Mammary epithelial cell (primary cell): ENCODE measurements at regions of chr3 and their contacts with region 1.

Region 1: DNA sequence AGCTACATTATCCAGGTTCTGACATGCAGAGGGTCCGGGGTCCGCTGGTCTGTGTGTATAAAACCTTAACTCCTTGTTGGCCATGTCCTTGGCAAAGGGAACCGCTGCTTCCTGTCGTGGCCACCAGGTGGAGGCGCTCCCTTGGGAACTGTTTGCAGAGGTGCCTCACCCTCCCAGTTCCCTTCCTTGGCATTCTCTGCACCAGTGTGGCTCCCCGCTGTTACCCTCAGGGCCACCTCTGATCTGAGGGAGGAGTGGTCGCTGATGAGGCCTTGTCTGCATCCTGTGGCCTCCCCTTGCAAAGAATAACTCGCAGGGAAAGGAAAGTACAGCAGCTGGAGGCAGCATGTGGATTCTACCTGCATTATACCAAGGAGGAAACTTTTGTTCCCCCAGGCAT is 89.6 kb downstream of the CHRD start:
- DNase-seq: peak; percentile 35
- H3K4me3 ChIP-seq: no peak overlapping the region
- H3K27ac ChIP-seq: no peak overlapping the region
- H3K4me1 ChIP-seq: peaks cover 10% of the 10 kb centered on the region
- H3K27me3 ChIP-seq: no peaks in the 10 kb centered on the region
- CTCF ChIP-seq: peak; percentile 84 to 97

Region 2: GRCh38 chr3:183895296-183895695 is 574.1 kb before region 1 on chr3:
- CTCF ChIA-PET with region 1: no interaction called
- dilution Hi-C with region 1: no loop called
- in situ Hi-C with region 1: no loop called
- intact Hi-C with region 1: loop called (anchors 5 kb)
- DNase-seq: peak; percentile 32
- H3K4me3 ChIP-seq: no peak overlapping the region
- H3K27ac ChIP-seq: no peak overlapping the region
- H3K4me1 ChIP-seq: no peaks in the 10 kb centered on the region
- H3K27me3 ChIP-seq: no peaks in the 10 kb centered on the region
- CTCF ChIP-seq: peak; percentile 83 to 92

Region 3: GRCh38 chr3:184380191-184380626 is 89.2 kb before region 1 on chr3:
- CTCF ChIA-PET with region 1: no interaction called
- dilution Hi-C with region 1: loop called (anchors 5 kb)
- in situ Hi-C with region 1: no loop called
- intact Hi-C with region 1: no loop called
- DNase-seq: no peak
- H3K4me3 ChIP-seq: peak overlapping the region in 2 of 3 experiments; percentile 15 to 43
- H3K27ac ChIP-seq: no peak overlapping the region
- H3K4me1 ChIP-seq: peaks cover 3% of the 10 kb centered on the region
- H3K27me3 ChIP-seq: peaks cover 18% of the 10 kb centered on the region
- CTCF ChIP-seq: no peak

Region 4: GRCh38 chr3:184423561-184423960 is 45.9 kb before region 1 on chr3:
- CTCF ChIA-PET with region 1: interaction called, 16 read pairs
- dilution Hi-C with region 1: loop called (anchors 5 kb)
- in situ Hi-C with region 1: loop called (anchors 5 kb)
- intact Hi-C with region 1: loop called (anchors 1 kb)
- DNase-seq: peak; percentile 15
- H3K4me3 ChIP-seq: no peak overlapping the region
- H3K27ac ChIP-seq: no peak overlapping the region
- H3K4me1 ChIP-seq: peaks cover 5% of the 10 kb centered on the region
- H3K27me3 ChIP-seq: peaks cover 3% of the 10 kb centered on the region
- CTCF ChIP-seq: no peak

Region 5: DNA sequence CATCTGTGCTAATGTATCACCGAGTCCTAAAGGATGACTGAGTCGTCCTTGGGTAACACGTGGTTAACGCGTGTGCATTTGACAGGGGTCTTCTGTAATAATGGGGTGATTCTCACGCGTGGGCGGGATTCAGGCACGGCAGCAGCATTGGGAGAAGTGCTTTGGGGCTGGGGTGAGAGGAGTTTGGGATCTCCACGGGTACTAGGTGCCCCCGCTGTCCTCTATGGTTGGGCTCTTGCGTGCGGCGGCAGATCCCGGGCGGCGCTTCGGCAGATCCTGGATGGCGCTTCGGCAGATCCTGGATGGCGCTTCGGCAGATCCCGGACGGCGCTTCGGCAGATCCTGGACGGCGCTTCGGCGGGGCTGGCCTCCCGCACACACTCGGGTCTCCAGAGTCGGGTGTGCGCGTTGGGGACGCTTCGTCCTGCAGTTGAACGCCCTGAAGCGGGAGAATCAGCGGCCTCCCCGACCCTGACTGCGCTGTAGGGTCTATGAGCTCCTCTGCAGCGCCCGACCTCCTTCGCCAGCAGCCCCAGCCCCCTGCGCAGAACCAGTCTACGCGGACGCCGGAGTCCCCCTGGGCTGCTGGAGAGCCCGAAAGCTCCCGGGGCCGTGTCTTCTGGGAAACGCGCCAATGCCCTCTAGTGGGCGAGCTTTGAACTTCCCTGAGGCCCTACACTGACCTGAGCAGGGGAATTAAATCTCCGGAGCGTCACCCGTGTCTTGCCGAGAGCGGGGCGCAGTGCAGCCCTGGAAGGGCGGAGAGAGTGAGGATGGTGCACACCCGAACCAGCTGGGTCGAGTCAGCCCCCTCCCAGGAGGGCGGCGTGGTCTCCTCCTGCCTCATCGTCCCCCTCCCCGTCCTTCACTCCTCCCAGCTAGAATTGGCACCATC is 44.1 kb after region 1 on chr3:
- CTCF ChIA-PET with region 1: interaction called, 3 read pairs
- dilution Hi-C with region 1: no loop called
- in situ Hi-C with region 1: no loop called
- intact Hi-C with region 1: loop called (anchors 1 kb)
- DNase-seq: peak; percentile 63
- H3K4me3 ChIP-seq: peak overlapping the region; percentile 41 to 62 (median 54)
- H3K27ac ChIP-seq: no peak overlapping the region
- H3K4me1 ChIP-seq: peaks cover 6% of the 10 kb centered on the region
- H3K27me3 ChIP-seq: peaks cover 3% of the 10 kb centered on the region
- CTCF ChIP-seq: peak; percentile 63 to 85

Region 6: DNA sequence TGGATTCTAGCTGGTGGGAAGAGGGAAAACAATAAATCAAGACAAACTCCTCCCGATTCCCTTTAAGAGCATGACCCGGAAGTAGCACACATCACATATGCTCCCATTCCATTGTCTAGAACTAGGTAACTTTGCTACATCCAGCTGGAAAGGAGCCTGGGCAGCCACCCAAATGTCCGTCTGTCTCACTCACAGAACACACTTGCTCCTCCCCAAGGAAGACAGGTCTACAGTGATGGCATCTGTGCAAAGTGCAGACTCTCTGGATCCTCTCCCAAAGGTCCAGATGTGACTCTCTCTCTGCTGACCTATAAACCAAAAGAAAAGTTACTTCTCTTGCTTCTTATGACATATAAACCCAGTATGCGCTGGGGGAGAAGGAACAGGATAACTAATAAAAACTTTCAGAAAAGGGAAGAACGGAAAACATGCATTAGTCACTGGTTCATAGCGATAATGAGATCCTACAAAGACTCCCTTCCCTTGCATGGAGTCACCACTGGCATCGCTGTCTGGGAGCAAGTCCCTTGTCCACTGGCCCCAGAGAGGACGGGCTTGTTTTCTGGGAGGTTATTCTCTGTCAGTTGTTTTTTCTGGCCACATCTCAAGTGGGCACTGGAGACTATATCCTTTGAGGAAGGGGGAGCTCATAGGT is 62.3 kb after region 1 on chr3:
- CTCF ChIA-PET with region 1: no interaction called
- dilution Hi-C with region 1: no loop called
- in situ Hi-C with region 1: loop called (anchors 5 to 10 kb)
- intact Hi-C with region 1: no loop called
- DNase-seq: no peak
- H3K4me3 ChIP-seq: no peak overlapping the region
- H3K27ac ChIP-seq: no peak overlapping the region
- H3K4me1 ChIP-seq: no peaks in the 10 kb centered on the region
- H3K27me3 ChIP-seq: no peaks in the 10 kb centered on the region
- CTCF ChIP-seq: no peak

Region 7: DNA sequence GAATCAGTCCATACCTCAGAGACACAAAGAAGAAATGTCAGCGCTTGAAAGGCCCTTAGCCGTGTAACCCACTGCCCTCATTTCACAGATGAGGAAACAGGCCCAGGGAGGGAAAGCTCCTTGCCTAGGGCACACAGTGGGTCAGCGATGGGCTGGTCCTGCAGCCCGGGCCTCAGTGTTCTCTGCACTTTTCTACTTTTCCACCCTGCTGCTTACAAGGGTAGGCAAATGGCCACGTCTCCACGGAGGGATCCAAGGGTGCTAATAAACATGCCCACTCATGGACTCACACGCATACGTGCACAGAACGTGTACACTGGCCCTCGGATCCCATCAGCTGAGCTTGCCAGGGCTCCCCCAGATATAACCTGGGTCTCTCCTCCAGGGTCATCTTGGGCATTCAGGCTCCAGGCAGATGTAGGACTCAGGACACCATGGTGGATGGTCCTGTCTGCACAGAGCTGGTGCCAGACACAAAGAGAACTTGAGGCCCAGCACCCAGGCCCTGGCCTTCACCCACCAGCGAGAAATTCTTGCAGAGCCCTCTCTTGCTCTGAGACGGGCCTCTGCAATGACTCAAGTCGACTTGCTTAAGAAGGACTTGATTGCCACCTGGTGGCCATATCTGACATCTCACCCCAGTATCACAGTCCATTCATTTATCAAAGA is 308.0 kb after region 1 on chr3:
- CTCF ChIA-PET with region 1: no interaction called
- dilution Hi-C with region 1: no loop called
- in situ Hi-C with region 1: no loop called
- intact Hi-C with region 1: loop called (anchors 5 kb)
- DNase-seq: peak; percentile 80
- H3K4me3 ChIP-seq: no peak overlapping the region
- H3K27ac ChIP-seq: no peak overlapping the region
- H3K4me1 ChIP-seq: peaks cover 18% of the 10 kb centered on the region
- H3K27me3 ChIP-seq: no peaks in the 10 kb centered on the region
- CTCF ChIP-seq: peak; percentile 74